CD4-positive, alpha-beta T cell (primary cell): ENCODE measurements at regions of chr11 and their contacts with region 1.

Region 1: DNA sequence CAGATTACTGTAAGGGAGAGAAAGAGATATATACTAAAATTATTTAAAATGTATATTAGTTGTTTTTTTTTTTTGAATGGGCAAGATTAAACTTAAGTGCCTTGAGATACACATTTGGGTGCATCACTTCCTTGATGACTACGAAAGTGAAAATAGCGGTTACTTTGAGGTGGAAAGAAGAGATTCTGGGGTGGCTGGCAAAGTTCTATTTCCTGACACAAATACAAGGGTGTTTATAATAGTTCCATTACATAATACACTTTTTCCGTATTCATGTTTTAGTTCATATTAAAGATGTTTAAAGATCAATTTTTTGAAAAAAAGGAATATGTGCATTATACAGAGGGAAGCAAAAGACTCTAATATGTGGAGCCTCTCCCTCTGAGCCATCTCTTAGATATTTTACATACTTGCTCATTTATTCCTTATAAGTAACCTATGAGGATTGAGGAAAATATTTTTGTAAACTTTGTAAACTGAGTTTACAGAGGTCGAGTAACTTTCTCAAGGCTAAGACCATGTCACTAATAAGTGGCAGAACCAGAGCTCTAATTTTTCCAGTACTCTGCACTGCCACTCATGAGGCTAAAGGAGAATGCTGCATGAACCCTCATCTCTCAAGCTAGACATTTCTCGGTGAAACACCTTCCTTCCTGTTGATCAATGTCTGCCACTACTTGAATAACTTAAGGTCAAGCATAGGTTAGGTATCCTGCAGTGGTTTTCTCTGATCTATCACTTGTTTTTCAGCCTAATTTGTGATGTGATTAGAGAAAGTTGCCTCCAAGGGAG is 58.6 kb downstream of the DDIAS start:
- DNase-seq: peak in 10 of 14 experiments; percentile 12 to 92 (median 46)
- ATAC-seq: peak; percentile 85
- H3K4me3 ChIP-seq: peak overlapping the region; percentile 37
- H3K4me3 Mint-ChIP-seq: peak overlapping the region; percentile 69
- H3K27ac ChIP-seq: peak overlapping the region; percentile 76 to 81
- H3K27ac Mint-ChIP-seq: peak overlapping the region; percentile 97
- H3K4me1 ChIP-seq: peaks cover 45% of the 10 kb centered on the region
- H3K4me1 Mint-ChIP-seq: peaks cover 88% of the 10 kb centered on the region
- H3K27me3 ChIP-seq: no peaks in the 10 kb centered on the region
- H3K27me3 Mint-ChIP-seq: no peaks in the 10 kb centered on the region
- CTCF ChIP-seq: no peak

Region 2: GRCh38 chr11:82892611-82893169 is 67.5 kb before region 1 on chr11:
- CTCF ChIA-PET with region 1: no interaction called
- POLR2A ChIA-PET with region 1: no interaction called
- intact Hi-C with region 1: no loop called
- DNase-seq: no peak
- ATAC-seq: no peak
- H3K4me3 ChIP-seq: no peak overlapping the region
- H3K4me3 Mint-ChIP-seq: no peak overlapping the region
- H3K27ac ChIP-seq: no peak overlapping the region
- H3K27ac Mint-ChIP-seq: no peak overlapping the region
- H3K4me1 ChIP-seq: no peaks in the 10 kb centered on the region
- H3K4me1 Mint-ChIP-seq: peaks cover 16% of the 10 kb centered on the region
- H3K27me3 ChIP-seq: no peaks in the 10 kb centered on the region
- H3K27me3 Mint-ChIP-seq: no peaks in the 10 kb centered on the region
- CTCF ChIP-seq: no peak

Region 3: DNA sequence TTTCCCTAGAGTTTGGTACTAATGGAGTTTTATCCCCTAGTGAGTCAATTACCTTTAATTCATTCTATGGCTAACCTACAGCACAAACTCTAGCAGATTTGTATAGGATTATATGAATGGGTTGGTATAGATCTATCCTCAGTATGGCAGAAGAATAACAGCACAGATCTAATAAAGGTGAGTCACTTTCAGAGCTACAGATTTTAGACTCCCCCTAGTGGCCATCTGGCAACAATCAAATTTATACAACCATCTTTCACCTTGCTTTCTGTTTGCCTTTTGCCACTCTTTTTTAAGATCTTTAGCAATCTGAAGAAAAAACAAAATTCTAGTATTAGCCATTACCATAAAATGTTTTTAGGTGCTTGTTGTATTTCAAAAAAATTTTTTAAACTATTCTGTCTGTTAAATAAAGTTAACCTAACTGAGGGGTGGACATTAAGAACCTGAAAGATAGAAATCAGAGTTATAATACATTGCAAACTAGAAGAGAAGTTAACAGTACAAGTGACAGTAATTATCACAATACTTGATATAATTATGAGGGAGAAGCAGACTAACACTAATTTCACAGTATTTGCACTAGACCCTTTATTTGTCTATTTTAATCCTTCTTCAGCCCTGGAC is 32.8 kb before region 1 on chr11:
- CTCF ChIA-PET with region 1: interaction called, 7 read pairs
- POLR2A ChIA-PET with region 1: interaction called, 31 read pairs
- intact Hi-C with region 1: loop called (anchors 1 to 5 kb)
- DNase-seq: peak in 8 of 14 experiments; percentile 7 to 82 (median 44)
- ATAC-seq: peak; percentile 98
- H3K4me3 ChIP-seq: no peak overlapping the region
- H3K4me3 Mint-ChIP-seq: peak overlapping the region; percentile 1
- H3K27ac ChIP-seq: no peak overlapping the region
- H3K27ac Mint-ChIP-seq: peak overlapping the region; percentile 64
- H3K4me1 ChIP-seq: peaks cover 2% of the 10 kb centered on the region
- H3K4me1 Mint-ChIP-seq: peaks cover 44% of the 10 kb centered on the region
- H3K27me3 ChIP-seq: no peaks in the 10 kb centered on the region
- H3K27me3 Mint-ChIP-seq: no peaks in the 10 kb centered on the region
- CTCF ChIP-seq: peak; percentile 97

Region 4: DNA sequence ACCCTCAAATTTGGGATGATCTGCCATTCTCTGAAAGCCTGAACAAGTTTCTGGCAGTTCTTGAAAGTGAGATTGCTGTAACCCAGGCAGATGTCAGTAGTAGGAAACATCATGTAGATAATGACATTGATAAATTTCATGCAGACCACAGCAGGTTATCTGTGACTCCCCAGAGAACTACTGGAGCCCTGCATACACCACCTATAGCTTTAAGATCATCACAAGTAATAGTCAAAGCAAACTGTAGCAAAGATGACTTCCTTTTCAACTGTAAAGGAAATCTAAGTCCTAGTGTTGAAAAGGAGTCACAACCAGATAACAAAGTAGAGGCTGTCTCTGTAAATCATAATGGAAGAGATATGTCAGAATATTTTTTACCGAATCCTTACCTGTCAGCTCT is 27.6 kb before region 1 on chr11:
- CTCF ChIA-PET with region 1: interaction called, 7 read pairs
- POLR2A ChIA-PET with region 1: interaction called, 31 read pairs
- intact Hi-C with region 1: loop called (anchors 1 to 5 kb)
- DNase-seq: no peak
- ATAC-seq: no peak
- H3K4me3 ChIP-seq: no peak overlapping the region
- H3K4me3 Mint-ChIP-seq: peak overlapping the region; percentile 39
- H3K27ac ChIP-seq: no peak overlapping the region
- H3K27ac Mint-ChIP-seq: peak overlapping the region; percentile 34
- H3K4me1 ChIP-seq: peaks cover 4% of the 10 kb centered on the region
- H3K4me1 Mint-ChIP-seq: peaks cover 48% of the 10 kb centered on the region
- H3K27me3 ChIP-seq: no peaks in the 10 kb centered on the region
- H3K27me3 Mint-ChIP-seq: no peaks in the 10 kb centered on the region
- CTCF ChIP-seq: no peak

Region 5: GRCh38 chr11:83063073-83063754 is 103.0 kb after region 1 on chr11:
- CTCF ChIA-PET with region 1: interaction called, 3 read pairs
- POLR2A ChIA-PET with region 1: interaction called, 10 read pairs
- intact Hi-C with region 1: no loop called
- DNase-seq: peak in 3 of 14 experiments; percentile 46 to 62 (median 53)
- ATAC-seq: peak; percentile 87
- H3K4me3 ChIP-seq: peak overlapping the region; percentile 39
- H3K4me3 Mint-ChIP-seq: peak overlapping the region; percentile 87
- H3K27ac ChIP-seq: peak overlapping the region; percentile 6 to 36
- H3K27ac Mint-ChIP-seq: peak overlapping the region; percentile 78
- H3K4me1 ChIP-seq: peaks cover 13% of the 10 kb centered on the region
- H3K4me1 Mint-ChIP-seq: peaks cover 39% of the 10 kb centered on the region
- H3K27me3 ChIP-seq: no peaks in the 10 kb centered on the region
- H3K27me3 Mint-ChIP-seq: no peaks in the 10 kb centered on the region
- CTCF ChIP-seq: no peak

Region 6: GRCh38 chr11:83656931-83657330 is 696.7 kb after region 1 on chr11:
- CTCF ChIA-PET with region 1: no interaction called
- POLR2A ChIA-PET with region 1: no interaction called
- intact Hi-C with region 1: no loop called
- DNase-seq: no peak
- ATAC-seq: no peak
- H3K4me3 ChIP-seq: no peak overlapping the region
- H3K4me3 Mint-ChIP-seq: no peak overlapping the region
- H3K27ac ChIP-seq: no peak overlapping the region
- H3K27ac Mint-ChIP-seq: no peak overlapping the region
- H3K4me1 ChIP-seq: no peaks in the 10 kb centered on the region
- H3K4me1 Mint-ChIP-seq: no peaks in the 10 kb centered on the region
- H3K27me3 ChIP-seq: no peaks in the 10 kb centered on the region
- H3K27me3 Mint-ChIP-seq: no peaks in the 10 kb centered on the region
- CTCF ChIP-seq: no peak